Ovary (tissue), 10 donors: ENCODE measurements at regions of chr11 and their contacts with region 1.

Region 1: GRCh38 chr11:93225662-93226061 is 27.9 kb upstream of the SLC36A4 start:
- DNase-seq: no peak
- H3K4me3 ChIP-seq: no peak overlapping the region
- H3K27ac ChIP-seq: no peak overlapping the region
- H3K4me1 ChIP-seq: no peaks in the 10 kb centered on the region
- H3K27me3 ChIP-seq: no peaks in the 10 kb centered on the region
- CTCF ChIP-seq: peak in 2 of 3 donors; percentile 19 to 24
- EP300 ChIP-seq: no peak
- POLR2A ChIP-seq: no peak

Region 2: GRCh38 chr11:92941676-92942571 is 283.7 kb before region 1 on chr11:
- intact Hi-C with region 1: loop called in 1 of 4 experiments (anchors 10 kb)
- DNase-seq: no peak
- H3K4me3 ChIP-seq: no peak overlapping the region
- H3K27ac ChIP-seq: no peak overlapping the region
- H3K4me1 ChIP-seq: no peaks in the 10 kb centered on the region
- H3K27me3 ChIP-seq: no peaks in the 10 kb centered on the region
- CTCF ChIP-seq: peak in 1 of 3 donors; percentile 25
- EP300 ChIP-seq: no peak
- POLR2A ChIP-seq: no peak

Region 3: GRCh38 chr11:93330446-93330984 is 104.9 kb after region 1 on chr11 and contains the start of gene DEUP1:
- intact Hi-C with region 1: no loop called
- DNase-seq: peak; percentile 37 to 68 (median 45)
- H3K4me3 ChIP-seq: peak within 1 kb of the TSS; percentile 33
- H3K27ac ChIP-seq: no peak within 1 kb of the TSS
- H3K4me1 ChIP-seq: peaks cover 3% of the 10 kb centered on the region
- H3K27me3 ChIP-seq: no peaks in the 10 kb centered on the region
- CTCF ChIP-seq: no peak
- EP300 ChIP-seq: no peak
- POLR2A ChIP-seq: no peak
- total RNA-seq, gene DEUP1: 0.18 to 2.0 (median 0.62) TPM in 6 of 7 donors, not detected in the other